Activated CD8-positive, alpha-beta T cell treated with anti-CD3 and anti-CD28 coated beads for 36 hours (primary cell): ENCODE measurements at regions of chr6 and their contacts with region 1.

Region 1: DNA sequence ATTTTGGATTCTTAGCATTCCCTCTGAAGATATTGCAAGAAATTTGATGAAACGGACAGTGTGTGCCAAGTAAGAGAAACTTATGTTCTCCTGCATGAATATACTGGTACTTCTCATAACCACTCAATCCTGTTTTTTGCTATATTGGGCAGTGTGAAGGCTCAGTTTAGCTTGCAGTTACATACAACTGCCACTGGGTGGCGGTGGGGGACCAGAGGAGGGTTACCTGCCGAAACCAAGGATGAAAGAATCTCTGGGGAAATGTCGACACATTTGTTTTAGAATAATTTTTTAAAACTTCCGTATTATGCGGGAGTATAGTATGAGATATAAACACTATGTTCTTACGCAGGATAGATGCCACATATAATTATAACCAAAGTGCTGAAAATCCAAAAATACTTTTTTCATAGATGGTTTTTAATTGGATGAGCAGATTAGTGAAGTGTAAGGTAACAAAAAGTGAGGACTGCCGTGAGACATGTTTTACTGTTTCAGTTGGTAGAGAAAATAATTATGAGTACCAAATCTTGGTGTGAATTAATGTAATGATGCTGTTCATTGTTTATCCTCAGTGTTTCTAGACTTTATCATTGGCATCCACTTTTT is 9.7 kb downstream of the TRMT11 start:
- DNase-seq: peak; percentile 56
- ATAC-seq: peak; percentile 99
- H3K4me3 Mint-ChIP-seq: peak overlapping the region; percentile 41
- H3K27ac Mint-ChIP-seq: no peak overlapping the region
- H3K4me1 Mint-ChIP-seq: peaks cover 34% of the 10 kb centered on the region
- H3K27me3 Mint-ChIP-seq: no peaks in the 10 kb centered on the region
- CTCF ChIP-seq: peak; percentile 98

Region 2: DNA sequence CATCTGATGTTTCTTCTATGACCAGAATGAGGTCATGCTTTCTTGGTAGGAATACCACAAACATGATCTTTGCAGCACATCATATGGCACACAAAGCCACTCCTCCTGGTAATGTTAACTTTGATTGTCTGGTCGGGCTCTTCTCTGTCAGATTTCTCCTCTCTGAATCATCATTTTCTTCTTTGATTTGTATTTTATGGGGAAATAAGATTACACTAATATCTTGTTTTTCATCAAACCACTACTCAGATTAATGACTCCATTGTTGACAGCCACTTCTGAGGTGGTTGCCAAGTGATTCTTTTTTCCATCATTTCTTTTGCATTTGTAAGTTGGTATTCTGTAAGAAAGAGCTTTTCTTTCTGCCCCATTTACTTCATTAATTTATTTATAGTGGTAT is 19.8 kb after region 1 on chr6:
- CTCF ChIA-PET with region 1: interaction called, 19 read pairs
- POLR2A ChIA-PET with region 1: no interaction called
- intact Hi-C with region 1: no loop called
- DNase-seq: no peak
- ATAC-seq: no peak
- H3K4me3 Mint-ChIP-seq: no peak overlapping the region
- H3K27ac Mint-ChIP-seq: no peak overlapping the region
- H3K4me1 Mint-ChIP-seq: no peaks in the 10 kb centered on the region
- H3K27me3 Mint-ChIP-seq: no peaks in the 10 kb centered on the region
- CTCF ChIP-seq: no peak

Region 3: DNA sequence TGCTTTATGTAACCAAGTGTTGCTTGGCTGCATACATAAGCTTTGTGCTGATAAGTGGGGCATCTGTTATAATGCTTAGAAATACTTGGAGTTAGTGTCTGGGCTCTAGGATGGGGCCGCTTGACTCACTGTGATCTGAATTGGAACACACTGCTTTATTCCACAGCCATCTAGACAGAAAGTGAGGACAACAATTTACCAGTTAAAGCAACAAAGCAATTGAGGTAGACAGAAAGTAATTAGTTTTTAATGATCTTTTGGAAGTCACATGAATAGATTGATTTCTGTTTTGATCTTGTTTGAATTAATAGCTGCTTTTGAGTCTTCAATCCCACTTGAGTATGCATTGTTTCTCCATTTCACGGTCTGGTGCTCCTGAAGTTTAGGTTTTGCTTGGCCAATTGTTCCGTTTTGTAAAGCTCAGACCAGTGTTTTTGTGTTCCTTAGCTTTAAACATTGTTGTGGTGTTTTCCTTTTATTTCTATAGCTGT is 147.7 kb after region 1 on chr6:
- CTCF ChIA-PET with region 1: no interaction called
- POLR2A ChIA-PET with region 1: no interaction called
- intact Hi-C with region 1: no loop called
- DNase-seq: no peak
- ATAC-seq: no peak
- H3K4me3 Mint-ChIP-seq: no peak overlapping the region
- H3K27ac Mint-ChIP-seq: no peak overlapping the region
- H3K4me1 Mint-ChIP-seq: no peaks in the 10 kb centered on the region
- H3K27me3 Mint-ChIP-seq: no peaks in the 10 kb centered on the region
- CTCF ChIP-seq: no peak